A673 (cell line): ENCODE measurements at regions of chr15 and their contacts with region 1.

Region 1: DNA sequence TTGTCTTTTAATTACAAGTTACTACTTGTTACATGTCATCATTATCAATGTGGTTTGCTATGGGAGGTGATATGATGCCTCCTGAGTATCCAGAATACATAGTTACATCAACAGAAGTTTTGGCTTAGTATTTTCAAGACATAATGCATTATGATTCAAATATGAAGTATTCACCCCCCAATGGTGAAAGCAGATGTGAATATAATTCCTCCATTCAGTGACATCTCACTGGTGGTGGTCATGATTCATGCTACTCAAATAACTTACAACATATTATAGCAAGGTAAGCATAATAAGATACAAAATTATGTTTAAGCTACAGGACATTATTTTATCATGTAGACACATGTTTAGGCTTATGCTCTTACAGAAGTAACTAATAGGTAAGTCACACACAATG is 34.9 kb upstream of the TTBK2 start:
- DNase-seq: no peak
- H3K4me3 ChIP-seq: no peak overlapping the region
- H3K27ac ChIP-seq: no peak overlapping the region
- H3K4me1 ChIP-seq: no peaks in the 10 kb centered on the region
- H3K27me3 ChIP-seq: no peaks in the 10 kb centered on the region
- CTCF ChIP-seq: no peak

Region 2: DNA sequence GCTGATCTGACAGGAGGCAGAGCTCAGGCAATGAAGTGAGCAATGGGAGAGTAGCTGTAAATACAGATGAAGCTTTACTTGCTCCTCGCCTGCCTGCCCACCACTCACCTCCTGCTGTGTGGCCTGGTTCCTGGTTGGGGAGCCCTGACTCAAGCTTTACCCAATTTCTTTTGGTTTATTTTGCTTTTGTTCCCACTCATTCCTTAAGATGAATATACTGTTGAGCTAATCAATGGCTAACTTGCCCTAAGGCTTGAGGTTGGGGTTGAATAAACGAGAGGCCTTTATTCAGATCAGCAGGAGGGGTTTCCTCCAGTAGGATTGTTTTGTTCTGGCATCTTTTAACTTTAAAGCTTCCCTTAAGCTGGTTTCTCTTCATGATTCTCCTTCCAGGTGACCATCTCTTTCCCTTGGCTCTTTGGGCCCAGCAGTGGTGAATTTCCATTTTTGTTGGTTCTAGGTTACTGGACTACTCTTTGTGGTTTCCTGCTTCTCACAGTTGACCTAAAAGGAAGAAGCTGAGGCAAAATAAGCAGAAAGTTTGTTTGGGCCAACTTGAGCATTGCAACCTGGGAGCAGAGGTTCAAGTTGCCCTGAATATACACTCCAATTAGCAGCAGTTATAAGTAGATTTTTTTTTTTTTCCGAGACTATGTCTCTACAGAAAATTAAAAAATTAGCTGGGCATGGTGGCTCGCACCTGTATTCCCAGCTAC is 335.7 kb before region 1 on chr15:
- CTCF ChIA-PET with region 1: no interaction called
- POLR2A ChIA-PET with region 1: no interaction called
- intact Hi-C with region 1: no loop called
- DNase-seq: no peak
- H3K4me3 ChIP-seq: no peak overlapping the region
- H3K27ac ChIP-seq: no peak overlapping the region
- H3K4me1 ChIP-seq: no peaks in the 10 kb centered on the region
- H3K27me3 ChIP-seq: no peaks in the 10 kb centered on the region
- CTCF ChIP-seq: no peak

Region 3: DNA sequence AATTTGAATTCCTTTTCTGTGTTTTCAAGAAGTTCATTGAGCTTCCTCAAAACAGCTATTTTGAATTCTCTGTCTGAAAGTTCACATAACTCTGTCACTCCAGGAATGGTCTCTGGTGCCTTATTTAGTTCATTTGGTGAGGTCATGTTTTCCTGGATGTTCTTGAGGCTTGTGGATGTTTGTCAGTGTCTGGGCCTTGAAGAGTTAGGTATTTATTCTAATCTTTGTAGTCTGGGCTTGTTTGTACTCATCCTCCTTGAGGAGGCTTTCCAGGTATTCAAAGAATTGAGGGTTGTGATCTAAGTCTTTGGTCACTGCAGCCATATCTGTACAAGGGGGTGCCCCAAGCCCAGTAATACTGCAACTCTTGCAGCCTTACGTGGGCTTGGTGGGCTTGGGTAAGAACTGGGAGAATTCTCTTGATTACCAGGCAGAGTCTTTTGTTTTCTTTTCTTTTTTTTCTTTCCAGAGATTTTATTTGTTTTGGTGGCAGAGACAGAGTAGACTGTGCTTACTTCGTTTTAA is 210.3 kb after region 1 on chr15:
- CTCF ChIA-PET with region 1: no interaction called
- POLR2A ChIA-PET with region 1: interaction called, 19 read pairs
- intact Hi-C with region 1: no loop called
- DNase-seq: no peak
- H3K4me3 ChIP-seq: no peak overlapping the region
- H3K27ac ChIP-seq: no peak overlapping the region
- H3K4me1 ChIP-seq: no peaks in the 10 kb centered on the region
- H3K27me3 ChIP-seq: no peaks in the 10 kb centered on the region
- CTCF ChIP-seq: no peak